Sigmoid colon (tissue), 7 donors: ENCODE measurements at regions of chr21 and their contacts with region 1.

Region 1: DNA sequence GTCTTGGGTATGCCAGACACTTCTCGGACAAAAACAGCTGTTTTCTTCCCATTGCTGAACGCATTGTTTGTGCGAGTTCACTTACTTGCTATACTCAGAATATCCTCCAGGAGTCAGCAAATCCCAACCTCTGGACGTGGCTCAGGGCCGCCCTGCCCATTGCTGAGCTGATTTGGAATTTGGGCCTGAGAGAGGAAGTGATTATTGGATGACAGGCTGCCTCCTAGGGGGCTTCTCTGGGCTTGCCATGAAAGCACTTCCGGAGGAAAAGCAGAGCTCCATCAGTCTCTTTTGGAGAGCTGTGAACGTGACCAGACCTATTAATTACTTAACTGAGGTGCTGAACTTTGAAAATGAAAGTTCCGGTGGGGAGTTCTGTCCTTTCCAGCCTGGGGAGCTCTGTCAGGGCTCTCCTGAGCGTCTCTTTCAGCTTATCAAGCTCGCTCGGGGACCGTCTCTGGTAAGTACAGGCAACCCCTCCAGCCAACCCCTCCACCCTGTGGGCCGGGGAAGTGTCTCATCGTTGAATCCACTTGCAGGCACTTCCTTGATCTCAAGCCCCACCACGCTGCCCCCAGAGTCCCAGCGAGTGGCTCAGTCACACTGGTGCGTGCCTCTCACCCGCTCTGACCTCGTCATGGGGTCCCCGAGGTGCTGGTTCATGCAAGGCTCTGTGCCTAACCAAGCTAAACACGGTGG is 76.9 kb downstream of the CLIC6 start:
- DNase-seq: peak; percentile 84
- H3K4me3 ChIP-seq: no peak overlapping the region
- H3K27ac ChIP-seq: no peak overlapping the region
- H3K4me1 ChIP-seq: peaks cover 0 to 10% (median 5%) of the 10 kb centered on the region in 4 donors
- H3K27me3 ChIP-seq: peaks cover 0 to 11% (median 0%) of the 10 kb centered on the region in 3 donors
- CTCF ChIP-seq: peak; percentile 79 to 85 (median 82)
- EP300 ChIP-seq: no peak
- POLR2A ChIP-seq: no peak

Region 2: DNA sequence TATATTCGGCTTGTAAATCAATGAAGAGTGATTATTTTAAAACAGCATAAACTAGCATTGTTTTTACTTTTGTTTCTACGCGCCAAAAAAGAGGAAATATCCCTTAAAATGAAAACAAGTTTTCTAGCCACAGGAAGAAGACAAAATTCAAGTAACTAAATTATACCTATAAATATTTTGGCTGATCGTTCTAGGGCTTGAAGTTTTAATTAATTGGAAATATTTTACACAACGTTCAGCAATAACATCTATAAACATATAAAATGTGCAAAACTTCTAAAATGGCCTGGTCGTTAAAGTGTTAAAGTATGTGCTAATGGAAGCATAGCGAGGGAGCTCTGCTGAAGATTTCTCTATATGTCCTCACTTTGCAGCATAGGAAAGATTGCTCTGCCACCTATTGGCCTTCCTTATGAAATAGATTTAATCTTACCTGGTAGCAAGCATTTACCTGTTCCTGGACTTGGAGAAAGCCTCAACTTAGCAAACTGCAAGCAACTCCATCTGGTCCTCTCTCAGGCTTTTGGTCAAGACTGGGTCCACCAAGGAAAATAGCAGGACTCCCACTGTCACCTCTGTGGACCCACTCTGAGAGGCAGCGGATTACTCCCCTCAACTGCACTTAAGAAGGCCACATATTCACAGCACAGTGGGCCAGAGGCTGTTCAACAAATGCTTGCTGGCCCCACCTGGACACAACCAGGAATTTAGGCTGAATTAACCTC is 654.7 kb after region 1 on chr21:
- intact Hi-C with region 1: loop called (anchors 2 kb)
- DNase-seq: no peak
- H3K4me3 ChIP-seq: no peak overlapping the region
- H3K27ac ChIP-seq: no peak overlapping the region
- H3K4me1 ChIP-seq: peaks cover 0 to 19% (median 6%) of the 10 kb centered on the region in 4 donors
- H3K27me3 ChIP-seq: no peaks in the 10 kb centered on the region
- CTCF ChIP-seq: peak; percentile 48 to 59 (median 54)
- EP300 ChIP-seq: no peak
- POLR2A ChIP-seq: no peak

Region 3: DNA sequence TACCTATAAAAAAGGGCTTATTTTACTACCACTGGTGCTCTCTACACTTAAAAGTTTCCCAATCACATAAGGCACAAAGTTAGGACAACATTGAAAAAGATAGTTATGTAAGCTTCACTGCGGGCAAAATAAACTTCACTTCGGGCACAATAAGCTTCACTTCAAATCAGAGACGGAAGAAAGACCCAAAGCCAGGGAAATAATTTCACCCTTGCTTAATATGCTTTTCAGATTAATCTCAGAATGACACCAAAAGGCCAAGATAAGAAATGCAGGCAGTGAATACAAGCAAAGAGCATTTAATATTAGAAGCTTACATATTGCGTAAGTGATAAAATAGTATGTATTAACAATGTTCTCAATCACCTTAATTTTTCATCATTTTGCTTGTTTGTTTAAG is 870.4 kb after region 1 on chr21:
- intact Hi-C with region 1: loop called (anchors 10 kb)
- DNase-seq: no peak
- H3K4me3 ChIP-seq: no peak overlapping the region
- H3K27ac ChIP-seq: no peak overlapping the region
- H3K4me1 ChIP-seq: no peaks in the 10 kb centered on the region
- H3K27me3 ChIP-seq: no peaks in the 10 kb centered on the region
- CTCF ChIP-seq: peak in 2 of 4 experiments; percentile 24 to 36
- EP300 ChIP-seq: no peak
- POLR2A ChIP-seq: no peak

Region 4: GRCh38 chr21:35840197-35840799 is 1094.6 kb after region 1 on chr21:
- intact Hi-C with region 1: loop called (anchors 5 kb)
- DNase-seq: peak; percentile 75
- H3K4me3 ChIP-seq: no peak overlapping the region
- H3K27ac ChIP-seq: no peak overlapping the region
- H3K4me1 ChIP-seq: no peaks in the 10 kb centered on the region
- H3K27me3 ChIP-seq: no peaks in the 10 kb centered on the region
- CTCF ChIP-seq: peak; percentile 27 to 73 (median 68)
- EP300 ChIP-seq: no peak
- POLR2A ChIP-seq: no peak

Region 5: GRCh38 chr21:35940074-35940927 is 1194.6 kb after region 1 on chr21:
- intact Hi-C with region 1: loop called (anchors 2 kb)
- DNase-seq: peak; percentile 67
- H3K4me3 ChIP-seq: no peak overlapping the region
- H3K27ac ChIP-seq: no peak overlapping the region
- H3K4me1 ChIP-seq: no peaks in the 10 kb centered on the region
- H3K27me3 ChIP-seq: no peaks in the 10 kb centered on the region
- CTCF ChIP-seq: peak; percentile 44 to 64 (median 54)
- EP300 ChIP-seq: no peak
- POLR2A ChIP-seq: no peak

Region 6: DNA sequence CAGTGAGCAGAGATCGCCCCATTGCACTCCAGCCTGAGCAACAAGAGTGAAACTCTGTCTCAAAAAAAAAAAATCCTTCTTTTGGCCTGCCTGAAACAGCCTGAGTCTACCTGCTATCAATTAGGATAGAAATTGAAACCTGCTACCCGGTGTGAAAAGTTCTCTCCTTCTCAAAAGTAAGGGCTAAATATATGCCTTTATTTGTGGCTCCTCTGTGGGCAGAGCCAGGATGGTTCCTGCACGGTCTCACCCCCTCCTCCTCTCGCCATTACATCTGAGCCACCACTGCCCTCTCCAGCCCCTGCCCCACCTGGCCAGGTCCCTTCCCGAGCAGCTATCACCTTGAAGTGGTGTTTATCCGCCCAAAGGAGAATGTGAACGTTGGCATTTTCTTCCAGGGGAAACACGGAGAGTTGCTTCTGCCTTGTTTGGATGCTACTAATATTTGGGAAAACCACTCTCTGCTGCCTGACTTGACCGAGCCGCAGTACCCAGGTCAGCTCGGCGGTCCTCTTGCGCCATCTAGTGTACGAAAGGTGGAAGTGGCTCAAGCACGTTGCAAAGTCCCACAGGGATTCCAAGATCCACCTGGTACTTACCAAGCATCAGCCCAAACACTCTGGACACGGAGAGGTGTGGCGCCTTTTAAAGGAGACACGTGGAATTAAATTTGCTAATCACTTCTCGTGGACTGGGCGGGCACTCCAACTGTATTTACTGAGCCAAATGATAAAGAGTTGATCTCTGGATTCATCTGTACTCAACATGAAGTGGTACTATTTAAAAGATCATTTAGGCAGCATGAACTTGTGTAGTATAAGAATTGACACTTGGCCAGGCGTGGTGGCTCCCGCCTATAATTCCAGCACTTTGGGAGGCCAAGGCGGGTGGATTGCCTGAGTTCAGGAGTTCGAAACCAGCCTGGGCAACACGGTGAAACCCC is 1282.7 kb after region 1 on chr21:
- intact Hi-C with region 1: loop called (anchors 2 kb)
- DNase-seq: peak; percentile 89
- H3K4me3 ChIP-seq: no peak overlapping the region
- H3K27ac ChIP-seq: no peak overlapping the region
- H3K4me1 ChIP-seq: peaks cover 0 to 10% (median 7%) of the 10 kb centered on the region in 4 donors
- H3K27me3 ChIP-seq: no peaks in the 10 kb centered on the region
- CTCF ChIP-seq: peak; percentile 75 to 92 (median 86)
- EP300 ChIP-seq: no peak
- POLR2A ChIP-seq: no peak